ENCODE measurements at regions of chr14 and their contacts with region 1.

Region 1: GRCh38 chr14:24673534-24674203 is 39.7 kb upstream of the GZMB start:
- DNase-seq: peak; percentile 82
- ATAC-seq: peak; percentile 72
- H3K4me3 Mint-ChIP-seq: peak overlapping the region; percentile 66
- H3K27ac Mint-ChIP-seq: peak overlapping the region; percentile 99
- H3K4me1 Mint-ChIP-seq: peaks cover 85% of the 10 kb centered on the region
- H3K27me3 Mint-ChIP-seq: no peaks in the 10 kb centered on the region

Region 2: GRCh38 chr14:24442273-24443052 is 231.2 kb before region 1 on chr14 and contains the start of gene SDR39U1:
- CTCF ChIA-PET with region 1: no interaction called
- POLR2A ChIA-PET with region 1: interaction called, 3 read pairs
- intact Hi-C with region 1: loop called (anchors 2 to 5 kb)
- DNase-seq: peak; percentile 98
- ATAC-seq: peak; percentile 92
- H3K4me3 Mint-ChIP-seq: peak within 1 kb of the TSS; percentile 97
- H3K27ac Mint-ChIP-seq: peak within 1 kb of the TSS; percentile 99
- H3K4me1 Mint-ChIP-seq: peaks cover 41% of the 10 kb centered on the region
- H3K27me3 Mint-ChIP-seq: no peaks in the 10 kb centered on the region
- total RNA-seq, gene SDR39U1: 40.9 to 47.8 TPM

Region 3: DNA sequence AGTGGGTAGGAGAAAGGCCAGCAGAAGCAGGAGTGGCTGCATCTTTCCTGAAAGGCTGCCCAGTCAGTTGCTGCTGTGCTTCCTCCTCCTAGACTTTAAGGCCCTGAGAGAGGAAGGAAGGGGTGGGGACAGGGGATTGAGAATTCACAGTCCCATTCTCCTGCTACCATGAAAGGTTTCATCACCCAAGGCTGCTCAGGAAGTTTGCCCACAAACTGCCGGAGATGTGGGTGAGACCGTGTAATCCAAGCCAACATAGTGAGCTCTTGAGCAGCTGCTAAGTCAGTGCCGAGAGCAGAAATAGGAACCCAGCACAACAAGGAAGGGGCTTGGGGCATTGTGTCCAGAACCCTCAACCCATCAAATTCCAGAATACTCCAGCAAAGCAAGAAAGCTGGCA is 97.5 kb before region 1 on chr14 and contains the start of gene CTSG:
- CTCF ChIA-PET with region 1: no interaction called
- POLR2A ChIA-PET with region 1: no interaction called
- intact Hi-C with region 1: no loop called
- DNase-seq: no peak
- ATAC-seq: no peak
- H3K4me3 Mint-ChIP-seq: no peak within 1 kb of the TSS
- H3K27ac Mint-ChIP-seq: no peak within 1 kb of the TSS
- H3K4me1 Mint-ChIP-seq: no peaks in the 10 kb centered on the region
- H3K27me3 Mint-ChIP-seq: peaks cover 2% of the 10 kb centered on the region
- total RNA-seq, gene CTSG: 0.35 TPM in 1 of 2 experiments, not detected in the other

Region 4: GRCh38 chr14:24692382-24693352 is 19.0 kb after region 1 on chr14:
- CTCF ChIA-PET with region 1: interaction called, 9 read pairs
- POLR2A ChIA-PET with region 1: interaction called, 9 read pairs
- intact Hi-C with region 1: loop called (anchors 1 to 2 kb)
- DNase-seq: peak; percentile 51
- ATAC-seq: peak; percentile 79
- H3K4me3 Mint-ChIP-seq: peak overlapping the region; percentile 21
- H3K27ac Mint-ChIP-seq: peak overlapping the region; percentile 81
- H3K4me1 Mint-ChIP-seq: peaks cover 17% of the 10 kb centered on the region
- H3K27me3 Mint-ChIP-seq: peaks cover 4% of the 10 kb centered on the region